Spleen (tissue), 13 donors: ENCODE measurements at regions of chr22 and their contacts with region 1.

Region 1: GRCh38 chr22:48492366-48493320 is 1335.0 kb downstream of the BRD1 start:
- DNase-seq: peak; percentile 74
- H3K4me3 ChIP-seq: no peak overlapping the region
- H3K27ac ChIP-seq: no peak overlapping the region
- H3K4me1 ChIP-seq: peaks cover 0 to 19% (median 10%) of the 10 kb centered on the region in 6 donors
- H3K27me3 ChIP-seq: peaks cover 2 to 80% (median 35%) of the 10 kb centered on the region in 7 donors
- CTCF ChIP-seq: peak; percentile 37 to 81 (median 71)
- POLR2A ChIP-seq: no peak

Region 2: DNA sequence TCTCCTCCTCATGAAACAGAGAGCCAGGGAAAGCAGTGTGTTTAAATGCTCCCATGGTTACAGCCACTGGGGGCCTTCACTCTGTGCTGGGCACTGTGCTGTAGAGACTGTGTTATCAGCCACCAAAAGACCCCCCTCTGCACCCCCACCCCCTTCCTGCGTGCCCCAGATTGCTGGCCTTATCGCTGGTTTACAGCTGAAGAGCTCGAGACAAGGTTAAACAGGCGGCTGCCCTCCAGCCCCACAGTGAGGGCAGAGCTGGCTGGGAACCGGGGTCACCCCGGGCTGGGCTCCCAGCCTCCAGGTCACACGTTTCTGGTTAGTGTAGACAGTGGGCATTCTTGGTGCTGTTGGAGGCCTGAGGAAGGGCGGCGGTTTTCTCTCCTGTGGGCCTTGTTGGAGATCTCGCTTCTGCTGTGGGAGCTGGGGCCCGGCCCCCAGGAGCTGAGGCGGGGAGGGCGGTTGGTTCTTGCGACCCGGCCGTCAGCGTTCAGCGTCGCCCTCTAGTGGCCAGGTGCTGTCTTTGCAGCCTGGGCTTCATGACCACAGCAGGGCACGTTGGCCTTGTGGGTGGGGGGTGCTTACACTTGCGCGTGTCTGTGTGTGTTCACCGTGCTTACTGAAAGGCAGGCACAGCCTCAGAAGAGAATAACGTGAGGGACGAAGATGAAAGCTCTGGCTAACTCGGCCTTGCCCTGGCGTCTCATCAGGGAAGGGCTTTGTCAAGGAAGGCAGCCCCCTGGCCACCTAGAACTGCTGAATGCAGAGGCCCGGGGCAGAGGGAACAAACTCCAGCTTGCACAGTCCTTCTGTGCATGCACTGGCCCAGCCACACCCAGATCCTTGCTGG is 1689.4 kb before region 1 on chr22:
- intact Hi-C with region 1: loop called (anchors 5 kb)
- DNase-seq: peak; percentile 93
- H3K4me3 ChIP-seq: no peak overlapping the region
- H3K27ac ChIP-seq: peak overlapping the region in 3 of 8 donors; percentile 0 to 59 (median 20)
- H3K4me1 ChIP-seq: peaks cover 13 to 61% (median 29%) of the 10 kb centered on the region in 6 donors
- H3K27me3 ChIP-seq: no peaks in the 10 kb centered on the region
- CTCF ChIP-seq: peak; percentile 86 to 98 (median 95)
- POLR2A ChIP-seq: no peak

Region 3: GRCh38 chr22:48635816-48636215 is 143.2 kb after region 1 on chr22:
- intact Hi-C with region 1: no loop called
- DNase-seq: no peak
- H3K4me3 ChIP-seq: no peak overlapping the region
- H3K27ac ChIP-seq: no peak overlapping the region
- H3K4me1 ChIP-seq: no peaks in the 10 kb centered on the region
- H3K27me3 ChIP-seq: peaks cover 0 to 50% (median 0%) of the 10 kb centered on the region in 7 donors
- CTCF ChIP-seq: no peak
- POLR2A ChIP-seq: no peak

Region 4: GRCh38 chr22:48678171-48679135 is 185.8 kb after region 1 on chr22:
- intact Hi-C with region 1: no loop called
- DNase-seq: no peak
- H3K4me3 ChIP-seq: no peak overlapping the region
- H3K27ac ChIP-seq: no peak overlapping the region
- H3K4me1 ChIP-seq: no peaks in the 10 kb centered on the region
- H3K27me3 ChIP-seq: no peaks in the 10 kb centered on the region
- CTCF ChIP-seq: no peak
- POLR2A ChIP-seq: no peak